ENCODE measurements at regions of chr2 and their contacts with region 1.

Region 1: DNA sequence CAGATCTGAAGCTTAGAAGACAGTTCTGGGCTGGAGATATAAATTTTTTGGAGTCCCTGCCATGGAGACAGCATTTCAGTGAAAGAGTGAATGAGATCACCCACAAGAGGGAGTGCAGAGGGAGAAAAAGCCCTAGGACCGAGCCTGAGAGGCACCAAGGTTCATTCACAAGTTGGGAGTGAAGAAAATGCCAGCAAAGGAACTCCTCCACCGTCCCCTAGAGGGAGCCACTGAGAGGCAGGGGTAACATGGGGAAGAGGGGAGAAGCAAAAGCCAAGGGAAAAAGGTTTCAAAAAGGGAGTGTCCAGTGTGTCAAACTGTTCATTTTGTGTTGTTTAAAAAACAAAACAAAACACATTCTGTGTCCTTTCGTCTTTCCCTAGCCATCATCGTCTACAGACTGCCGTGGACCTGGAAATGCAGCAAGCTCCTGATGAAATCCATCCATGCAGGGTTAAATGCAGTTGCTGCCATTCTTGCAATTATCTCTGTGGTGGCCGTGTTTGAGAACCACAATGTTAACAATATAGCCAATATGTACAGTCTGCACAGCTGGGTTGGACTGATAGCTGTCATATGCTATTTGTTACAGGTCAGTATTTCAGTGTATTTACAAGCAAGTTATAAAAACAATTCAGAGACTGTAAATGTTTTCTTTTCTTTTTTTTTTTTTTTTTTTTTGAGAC is 19.1 kb downstream of the CYBRD1 start:
- DNase-seq: no peak
- H3K4me3 ChIP-seq: no peak overlapping the region
- H3K27me3 ChIP-seq: no peaks in the 10 kb centered on the region
- CTCF ChIP-seq: peak; percentile 42

Region 2: GRCh38 chr2:171529914-171530313 is 11.4 kb before region 1 on chr2:
- CTCF ChIA-PET with region 1: interaction called, 11 read pairs
- POLR2A ChIA-PET with region 1: no interaction called
- DNase-seq: no peak
- H3K4me3 ChIP-seq: no peak overlapping the region
- H3K27me3 ChIP-seq: no peaks in the 10 kb centered on the region
- CTCF ChIP-seq: peak; percentile 58

Measured in BJ (cell line).